ENCODE measurements at regions of chr16 and their contacts with region 1.

Region 1: GRCh38 chr16:89721546-89722391 is 432 bp downstream of the ZNF276 start:
- DNase-seq: peak; percentile 86
- ATAC-seq: peak; percentile 19
- H3K4me3 Mint-ChIP-seq: peak overlapping the region; percentile 99
- H3K27ac Mint-ChIP-seq: peak overlapping the region; percentile 97
- H3K4me1 Mint-ChIP-seq: peaks cover 33% of the 10 kb centered on the region
- H3K27me3 Mint-ChIP-seq: no peaks in the 10 kb centered on the region

Region 2: DNA sequence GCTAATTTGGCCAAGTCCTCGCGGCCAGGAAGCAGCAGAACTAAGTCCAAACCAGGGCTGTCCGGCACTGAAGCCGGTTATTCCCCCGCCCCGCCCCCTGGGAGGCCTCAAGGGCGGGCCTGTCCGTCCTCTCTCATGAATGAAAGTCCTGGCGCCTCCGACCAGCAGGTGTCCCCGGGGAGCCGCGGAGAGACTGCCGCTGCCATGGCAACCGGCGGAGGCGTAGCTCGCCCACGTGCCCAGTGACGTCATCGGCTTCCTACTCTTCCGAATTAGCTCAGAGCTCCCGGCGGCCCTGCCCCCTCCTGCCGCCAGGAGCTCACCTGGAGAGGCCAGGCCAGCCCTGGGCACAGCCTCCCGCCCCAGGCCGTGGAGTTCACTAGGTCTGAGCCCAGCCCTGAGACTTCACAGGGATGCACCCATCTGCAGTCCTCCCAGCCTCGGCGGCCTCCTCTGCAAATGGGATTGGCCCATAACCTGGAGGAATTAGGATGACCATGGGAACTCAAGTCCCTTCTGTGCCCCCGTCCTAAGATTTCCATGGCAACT is 21.6 kb before region 1 on chr16:
- POLR2A ChIA-PET with region 1: interaction called, 28 read pairs
- DNase-seq: peak; percentile 95
- ATAC-seq: peak; percentile 15
- H3K4me3 Mint-ChIP-seq: peak overlapping the region; percentile 85
- H3K27ac Mint-ChIP-seq: peak overlapping the region; percentile 48
- H3K4me1 Mint-ChIP-seq: peaks cover 14% of the 10 kb centered on the region
- H3K27me3 Mint-ChIP-seq: no peaks in the 10 kb centered on the region

Region 3: GRCh38 chr16:89711601-89712273 is 10.0 kb before region 1 on chr16:
- POLR2A ChIA-PET with region 1: interaction called, 16 read pairs
- DNase-seq: peak; percentile 92
- ATAC-seq: peak; percentile 85
- H3K4me3 Mint-ChIP-seq: peak overlapping the region; percentile 80
- H3K27ac Mint-ChIP-seq: peak overlapping the region; percentile 71
- H3K4me1 Mint-ChIP-seq: peaks cover 2% of the 10 kb centered on the region
- H3K27me3 Mint-ChIP-seq: no peaks in the 10 kb centered on the region

Region 4: DNA sequence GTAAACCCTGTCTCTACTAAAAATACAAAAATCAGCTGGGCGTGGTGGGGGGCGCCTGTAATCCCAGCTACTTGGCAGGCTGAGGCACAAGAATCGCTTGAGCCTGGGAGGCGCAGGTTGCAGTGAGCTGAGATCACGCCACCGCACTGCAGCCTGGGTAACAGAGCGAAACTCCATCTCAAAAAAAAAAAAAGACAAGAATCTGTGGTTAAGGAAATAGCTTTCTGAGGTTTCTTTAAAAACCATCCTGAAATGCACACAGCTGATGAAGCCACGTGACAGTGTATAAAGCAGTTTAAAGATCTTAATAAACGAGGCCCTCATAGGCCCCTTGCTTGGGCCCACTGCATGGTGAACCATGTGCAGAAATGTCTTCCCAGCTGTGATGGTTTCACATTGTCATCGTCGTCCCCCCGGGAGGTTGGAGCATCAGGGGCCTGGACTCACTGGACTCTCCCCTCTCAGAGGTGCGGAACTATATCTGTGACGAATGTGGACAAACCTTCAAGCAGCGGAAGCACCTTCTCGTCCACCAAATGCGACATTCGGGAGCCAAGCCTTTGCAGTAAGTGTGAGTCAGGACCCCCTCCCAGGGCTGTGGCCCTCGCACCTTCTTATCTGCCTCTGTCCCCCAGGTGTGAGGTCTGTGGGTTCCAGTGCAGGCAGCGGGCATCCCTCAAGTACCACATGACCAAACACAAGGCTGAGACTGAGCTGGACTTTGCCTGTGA is 15.7 kb after region 1 on chr16:
- POLR2A ChIA-PET with region 1: interaction called, 33 read pairs
- DNase-seq: no peak
- ATAC-seq: peak; percentile 60
- H3K4me3 Mint-ChIP-seq: peak overlapping the region; percentile 31
- H3K27ac Mint-ChIP-seq: peak overlapping the region; percentile 82
- H3K4me1 Mint-ChIP-seq: peaks cover 21% of the 10 kb centered on the region
- H3K27me3 Mint-ChIP-seq: no peaks in the 10 kb centered on the region

Region 5: DNA sequence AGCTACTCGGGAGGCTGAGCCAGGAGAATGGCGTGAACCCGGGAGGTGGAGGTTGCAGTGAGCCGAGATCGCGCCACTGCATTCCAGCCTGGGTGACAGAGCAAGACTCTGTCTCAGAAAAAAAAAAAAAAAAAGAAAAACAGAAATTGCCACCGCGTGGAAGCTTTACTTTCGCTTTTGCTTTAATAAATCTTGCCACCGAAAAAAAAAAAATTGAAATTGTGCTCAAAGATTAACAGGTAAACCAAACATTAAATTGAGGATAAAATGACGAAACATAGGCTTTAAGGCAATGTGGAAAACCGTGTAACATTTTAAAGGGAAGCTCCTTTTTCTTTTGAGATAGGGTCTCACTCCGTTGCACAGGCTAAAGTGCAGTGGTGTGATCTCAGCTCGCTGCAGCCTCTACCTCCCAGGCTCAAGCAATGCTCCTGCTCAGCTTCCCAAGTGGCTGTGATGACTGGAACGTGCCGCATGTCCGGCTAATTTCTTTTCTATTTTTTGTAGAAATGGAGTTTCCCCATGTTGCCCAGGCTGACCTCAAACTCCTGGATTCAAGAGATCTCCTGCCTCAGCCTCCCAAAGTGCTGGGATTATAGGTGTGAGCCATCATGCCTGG is 39.6 kb after region 1 on chr16:
- POLR2A ChIA-PET with region 1: interaction called, 11 read pairs
- DNase-seq: no peak
- ATAC-seq: no peak
- H3K4me3 Mint-ChIP-seq: peak overlapping the region; percentile 81
- H3K27ac Mint-ChIP-seq: peak overlapping the region; percentile 90
- H3K4me1 Mint-ChIP-seq: peaks cover 24% of the 10 kb centered on the region
- H3K27me3 Mint-ChIP-seq: no peaks in the 10 kb centered on the region

Region 6: GRCh38 chr16:89785523-89786155 is 63.9 kb after region 1 on chr16:
- POLR2A ChIA-PET with region 1: interaction called, 14 read pairs
- DNase-seq: peak; percentile 54
- ATAC-seq: peak; percentile 82
- H3K4me3 Mint-ChIP-seq: peak overlapping the region; percentile 69
- H3K27ac Mint-ChIP-seq: peak overlapping the region; percentile 71
- H3K4me1 Mint-ChIP-seq: peaks cover 31% of the 10 kb centered on the region
- H3K27me3 Mint-ChIP-seq: no peaks in the 10 kb centered on the region

Region 7: DNA sequence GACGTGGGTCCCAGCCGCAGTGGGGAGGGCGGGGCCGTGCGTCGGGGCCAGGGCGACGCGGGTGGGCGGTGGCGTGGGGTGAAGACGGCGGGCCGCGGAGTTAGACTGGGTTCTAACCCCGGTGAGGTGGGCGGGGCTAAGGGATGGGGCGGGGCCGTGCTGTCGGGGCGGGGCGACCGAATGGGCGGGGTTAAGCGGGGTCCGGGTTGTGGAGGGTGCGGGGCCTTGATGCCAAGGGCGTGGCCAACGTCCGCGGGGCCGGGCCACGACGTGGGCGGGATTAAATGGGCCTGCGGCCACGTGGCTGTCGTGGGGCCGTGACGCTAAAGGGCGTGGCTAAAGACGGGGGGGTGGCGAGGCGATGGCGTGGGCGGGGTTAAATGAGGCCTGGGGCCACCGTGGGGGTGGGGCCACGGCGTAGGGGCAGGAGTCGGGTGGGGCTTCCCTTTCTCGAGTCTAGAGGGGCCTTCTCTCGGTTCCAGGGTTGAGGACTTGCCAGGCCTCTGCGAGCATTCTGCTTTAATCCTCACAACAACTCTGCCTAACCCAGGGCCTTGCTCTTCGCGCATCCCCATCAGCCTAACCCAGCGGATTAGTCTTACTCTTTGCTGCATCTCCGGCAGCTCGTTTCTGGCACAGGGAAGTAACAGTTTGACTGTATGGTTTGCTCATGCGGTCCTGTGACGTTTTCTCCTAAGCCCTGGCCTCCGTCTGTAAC is 152.4 kb after region 1 on chr16:
- POLR2A ChIA-PET with region 1: interaction called, 22 read pairs
- DNase-seq: peak; percentile 92
- ATAC-seq: peak; percentile 69
- H3K4me3 Mint-ChIP-seq: peak overlapping the region; percentile 96
- H3K27ac Mint-ChIP-seq: peak overlapping the region; percentile 99
- H3K4me1 Mint-ChIP-seq: peaks cover 7% of the 10 kb centered on the region
- H3K27me3 Mint-ChIP-seq: no peaks in the 10 kb centered on the region